Activated CD4-positive, alpha-beta memory T cell treated with anti-CD3 and anti-CD28 coated beads for 36 hours (primary cell): ENCODE measurements at regions of chr4 and their contacts with region 1.

Region 1: GRCh38 chr4:142567199-142567598 is 278.9 kb downstream of the INPP4B start:
- DNase-seq: peak; percentile 75
- H3K4me3 Mint-ChIP-seq: peak overlapping the region; percentile 79
- H3K27ac Mint-ChIP-seq: peak overlapping the region; percentile 94
- H3K4me1 Mint-ChIP-seq: peaks cover 52% of the 10 kb centered on the region
- H3K27me3 Mint-ChIP-seq: no peaks in the 10 kb centered on the region

Region 2: DNA sequence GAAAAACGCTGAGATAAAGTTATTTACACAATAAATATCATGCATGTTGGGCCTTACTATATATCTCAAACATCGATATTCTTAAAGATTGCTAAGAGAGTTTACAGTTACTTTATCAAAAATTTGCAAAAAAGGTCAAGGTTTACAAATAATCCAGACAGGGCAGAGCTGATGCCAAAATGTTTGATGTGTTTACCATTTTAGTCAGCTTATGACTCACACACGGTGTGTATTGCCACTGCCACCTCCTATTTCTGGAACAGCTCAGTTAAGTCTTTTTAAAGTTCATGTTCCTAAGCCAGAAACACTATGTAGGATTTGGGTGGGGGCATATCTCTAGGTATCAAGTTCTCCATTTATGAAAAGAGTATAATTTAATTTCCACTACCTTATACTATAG is 301.7 kb before region 1 on chr4:
- CTCF ChIA-PET with region 1: interaction called, 5 read pairs
- POLR2A ChIA-PET with region 1: interaction called, 4 read pairs
- intact Hi-C with region 1: loop called (anchors 2 kb)
- DNase-seq: peak; percentile 40
- H3K4me3 Mint-ChIP-seq: peak overlapping the region; percentile 7
- H3K27ac Mint-ChIP-seq: peak overlapping the region; percentile 85
- H3K4me1 Mint-ChIP-seq: peaks cover 88% of the 10 kb centered on the region
- H3K27me3 Mint-ChIP-seq: no peaks in the 10 kb centered on the region

Region 3: DNA sequence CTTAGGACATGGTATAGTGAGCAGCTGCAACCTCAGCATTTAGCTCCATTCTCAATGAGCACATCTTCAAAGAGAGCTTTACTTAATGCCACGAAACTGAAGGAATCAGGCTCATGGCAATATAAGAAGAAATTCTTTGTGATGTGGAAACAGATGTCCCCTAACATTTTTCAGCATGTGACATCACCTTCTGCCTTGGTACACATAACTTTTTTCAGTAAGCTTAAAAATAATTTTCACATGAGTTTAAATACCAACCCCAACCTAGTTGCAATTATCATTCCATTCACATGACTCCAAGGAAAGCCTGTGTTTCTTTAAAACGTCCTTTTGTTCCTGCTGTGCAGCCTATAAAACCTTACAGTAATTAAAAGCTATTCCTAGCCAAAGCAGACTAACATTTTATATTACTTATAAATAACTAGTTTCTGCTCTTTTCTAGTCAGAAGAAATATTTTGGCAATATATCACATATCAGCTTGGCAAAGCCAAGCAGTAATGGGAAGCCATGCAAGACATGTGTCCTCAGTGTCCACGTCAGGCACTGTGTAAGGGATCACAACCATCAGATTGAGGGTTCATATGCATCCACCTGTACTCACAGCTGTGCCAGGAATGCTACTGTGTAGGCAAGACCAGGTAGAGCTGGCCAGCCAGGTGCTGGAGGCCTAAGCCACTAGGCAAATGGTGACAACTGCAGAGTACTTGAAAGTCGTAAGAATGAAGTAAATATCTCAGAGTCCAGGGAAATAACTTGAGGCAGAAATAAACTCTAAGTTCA is 187.7 kb before region 1 on chr4:
- CTCF ChIA-PET with region 1: interaction called, 3 read pairs
- POLR2A ChIA-PET with region 1: interaction called, 16 read pairs
- intact Hi-C with region 1: loop called (anchors 1 kb)
- DNase-seq: no peak
- H3K4me3 Mint-ChIP-seq: no peak overlapping the region
- H3K27ac Mint-ChIP-seq: peak overlapping the region; percentile 85
- H3K4me1 Mint-ChIP-seq: peaks cover 78% of the 10 kb centered on the region
- H3K27me3 Mint-ChIP-seq: no peaks in the 10 kb centered on the region

Region 4: GRCh38 chr4:142416711-142417275 is 150.4 kb before region 1 on chr4:
- CTCF ChIA-PET with region 1: interaction called, 4 read pairs
- POLR2A ChIA-PET with region 1: interaction called, 9 read pairs
- intact Hi-C with region 1: loop called (anchors 1 kb)
- DNase-seq: no peak
- H3K4me3 Mint-ChIP-seq: peak overlapping the region; percentile 72
- H3K27ac Mint-ChIP-seq: peak overlapping the region; percentile 92
- H3K4me1 Mint-ChIP-seq: peaks cover 67% of the 10 kb centered on the region
- H3K27me3 Mint-ChIP-seq: no peaks in the 10 kb centered on the region

Region 5: DNA sequence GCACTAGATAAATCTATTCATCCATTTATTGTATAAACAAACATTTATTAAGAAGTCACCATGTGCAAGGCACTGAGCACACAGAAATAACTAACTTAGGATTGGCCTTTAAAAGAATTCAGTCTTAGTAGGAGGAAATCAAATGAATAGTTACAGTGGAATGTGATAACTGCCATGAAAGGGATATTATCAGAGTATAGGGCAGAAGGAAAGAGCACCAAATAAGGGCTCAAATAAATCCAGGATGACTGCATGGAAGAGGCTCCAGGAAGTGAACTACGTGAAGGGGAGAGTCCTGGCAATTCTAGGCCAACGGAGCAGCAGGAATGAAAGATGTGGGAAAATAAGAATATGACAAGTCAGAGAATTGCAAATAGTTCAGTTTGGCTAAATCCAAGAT is 127.1 kb before region 1 on chr4:
- CTCF ChIA-PET with region 1: no interaction called
- POLR2A ChIA-PET with region 1: no interaction called
- intact Hi-C with region 1: no loop called
- DNase-seq: no peak
- H3K4me3 Mint-ChIP-seq: no peak overlapping the region
- H3K27ac Mint-ChIP-seq: no peak overlapping the region
- H3K4me1 Mint-ChIP-seq: peaks cover 14% of the 10 kb centered on the region
- H3K27me3 Mint-ChIP-seq: no peaks in the 10 kb centered on the region

Region 6: DNA sequence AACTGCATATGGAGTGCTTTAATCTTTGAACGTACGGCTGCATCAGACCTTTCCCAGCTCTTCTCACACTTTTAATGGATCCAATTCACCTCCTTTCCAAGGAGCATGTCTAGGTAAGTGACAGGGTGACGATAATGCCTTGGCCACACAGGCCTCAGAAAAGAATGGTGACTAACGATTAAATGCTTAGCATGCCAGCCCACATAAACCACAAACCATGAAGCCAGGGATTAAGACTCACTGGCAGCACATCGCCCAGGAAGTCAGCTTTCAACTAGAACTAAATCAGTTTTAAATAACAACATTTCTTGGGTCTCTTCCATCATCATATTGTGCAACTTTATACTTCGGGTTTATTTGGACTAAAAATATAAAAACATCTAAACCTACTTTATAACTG is 250.2 kb after region 1 on chr4:
- CTCF ChIA-PET with region 1: no interaction called
- POLR2A ChIA-PET with region 1: no interaction called
- intact Hi-C with region 1: loop called (anchors 5 kb)
- DNase-seq: peak; percentile 70
- H3K4me3 Mint-ChIP-seq: no peak overlapping the region
- H3K27ac Mint-ChIP-seq: peak overlapping the region; percentile 4
- H3K4me1 Mint-ChIP-seq: peaks cover 20% of the 10 kb centered on the region
- H3K27me3 Mint-ChIP-seq: peaks cover 5% of the 10 kb centered on the region

Region 7: GRCh38 chr4:143513306-143514168 is 946.3 kb after region 1 on chr4 and contains the start of gene SMARCA5:
- CTCF ChIA-PET with region 1: no interaction called
- POLR2A ChIA-PET with region 1: no interaction called
- intact Hi-C with region 1: loop called (anchors 5 kb)
- DNase-seq: peak; percentile 97
- H3K4me3 Mint-ChIP-seq: peak within 1 kb of the TSS; percentile 97
- H3K27ac Mint-ChIP-seq: peak within 1 kb of the TSS; percentile 97
- H3K4me1 Mint-ChIP-seq: peaks cover 25% of the 10 kb centered on the region
- H3K27me3 Mint-ChIP-seq: no peaks in the 10 kb centered on the region
- total RNA-seq, gene SMARCA5: 67.0 to 69.3 TPM